ENCODE measurements at regions of chr16 and their contacts with region 1.

Region 1: GRCh38 chr16:12455287-12455798 is 348.3 kb downstream of the CPPED1 start:
- DNase-seq: peak; percentile 79
- ATAC-seq: peak; percentile 81

Region 2: DNA sequence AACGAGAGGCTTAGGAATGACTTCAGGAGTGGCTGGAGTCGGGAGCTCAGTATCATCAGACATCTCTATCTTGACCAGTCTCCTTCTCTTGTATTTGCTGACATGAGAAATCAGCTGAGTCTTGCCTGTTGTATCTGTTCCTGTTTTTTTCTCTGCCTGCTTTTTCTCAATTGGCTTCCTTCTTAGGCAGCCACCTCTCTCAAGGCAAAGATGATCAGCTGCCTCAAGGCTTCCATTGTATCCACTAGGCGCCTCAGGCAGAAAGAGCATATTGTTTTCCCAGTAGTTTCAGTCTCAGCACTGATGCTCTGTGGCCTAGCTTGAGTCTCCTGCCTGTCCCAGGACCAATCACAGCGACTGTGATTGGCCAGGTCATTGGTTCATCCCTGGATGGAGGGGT is 42.2 kb after region 1 on chr16:
- intact Hi-C with region 1: no loop called
- DNase-seq: no peak
- ATAC-seq: no peak

Region 3: GRCh38 chr16:12531937-12532336 is 76.6 kb after region 1 on chr16:
- intact Hi-C with region 1: no loop called
- DNase-seq: no peak
- ATAC-seq: no peak

Region 4: GRCh38 chr16:12542818-12543699 is 87.7 kb after region 1 on chr16:
- intact Hi-C with region 1: no loop called
- DNase-seq: no peak
- ATAC-seq: no peak

Region 5: DNA sequence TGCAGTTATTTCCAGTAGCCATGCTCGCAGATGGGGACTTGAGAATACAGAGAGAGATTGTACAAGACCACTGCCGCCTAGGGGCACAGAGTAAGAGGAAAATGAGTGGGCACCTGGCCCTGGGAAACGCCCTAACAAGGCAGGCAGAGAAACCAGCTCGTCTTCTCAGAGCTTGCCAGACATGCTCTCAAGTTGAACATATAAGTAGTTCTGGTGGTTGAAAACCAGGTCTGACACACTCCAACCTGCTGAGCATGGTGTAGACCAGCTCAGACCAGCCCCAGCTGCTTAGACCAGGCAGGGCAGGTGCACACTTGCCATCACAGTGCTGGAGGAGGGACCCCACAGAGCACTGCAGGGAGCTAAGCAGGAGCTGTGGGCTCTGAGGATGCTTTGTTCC is 97.8 kb after region 1 on chr16:
- intact Hi-C with region 1: no loop called
- DNase-seq: no peak
- ATAC-seq: no peak

Region 6: DNA sequence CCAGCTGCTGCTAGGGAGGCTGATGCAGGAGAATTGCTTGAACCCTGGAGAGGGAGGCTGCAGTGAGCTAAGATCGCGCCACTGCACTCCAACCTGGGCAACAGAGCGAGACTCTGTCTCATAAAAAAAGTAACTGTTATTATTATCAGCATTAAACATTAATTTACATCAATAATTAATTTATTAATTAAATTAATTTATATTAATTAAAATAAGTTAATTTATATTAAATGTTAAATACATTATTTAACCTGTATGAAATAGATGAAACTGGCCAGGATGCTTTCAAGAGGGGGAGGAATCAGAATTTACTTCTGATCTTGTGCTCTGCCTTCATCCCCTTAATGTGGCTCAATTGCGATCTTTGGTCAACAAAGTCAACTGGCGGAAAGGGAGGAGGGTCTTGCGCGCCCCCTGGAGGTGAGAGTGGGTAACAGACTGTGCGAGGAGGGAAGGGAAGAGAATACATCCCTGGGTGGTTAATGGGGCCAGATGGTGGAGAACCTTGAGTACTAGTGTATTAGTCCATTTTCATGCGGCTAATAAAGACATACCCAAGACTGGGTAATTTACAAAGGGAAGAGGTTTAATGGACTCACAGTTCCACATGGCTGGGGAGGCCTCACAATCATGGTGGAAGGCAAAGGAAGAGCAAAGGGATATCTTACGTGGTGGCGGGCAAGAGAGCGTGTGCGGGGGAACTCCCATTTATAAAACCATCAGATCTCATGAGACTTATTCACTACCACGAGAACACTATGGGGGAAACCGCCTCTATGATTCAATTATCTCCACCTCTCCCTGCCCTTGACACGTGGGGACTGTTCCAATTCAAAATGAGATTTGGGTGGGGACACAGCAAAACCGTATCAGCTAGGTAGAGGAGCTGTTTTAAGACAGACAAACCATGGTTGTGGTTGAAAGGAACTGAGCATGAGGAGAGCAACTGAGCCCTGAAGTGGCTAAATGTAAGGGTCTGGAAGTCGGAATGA is 364.1 kb after region 1 on chr16:
- intact Hi-C with region 1: loop called (anchors 10 kb)
- DNase-seq: peak; percentile 72
- ATAC-seq: peak; percentile 32

Measured in left ventricle myocardium superior (tissue), 1 donor.